ENCODE measurements at regions of chr9 and their contacts with region 1.

Region 1: GRCh38 chr9:35096035-35096849 is at the start of gene PIGO:
- DNase-seq: peak; percentile 84
- H3K4me3 ChIP-seq: peak within 1 kb of the TSS; percentile 76 to 100 (median 82)
- H3K27ac ChIP-seq: peak within 1 kb of the TSS; percentile 91
- H3K4me1 ChIP-seq: peaks cover 7% of the 10 kb centered on the region
- H3K27me3 ChIP-seq: no peaks in the 10 kb centered on the region
- CTCF ChIP-seq: peak; percentile 93
- total RNA-seq, gene PIGO: 17.8 to 33.3 TPM

Region 2: GRCh38 chr9:34994260-34994899 is 101.9 kb before region 1 on chr9:
- CTCF ChIA-PET with region 1: no interaction called
- dilution Hi-C with region 1: no loop called
- in situ Hi-C with region 1: no loop called
- intact Hi-C with region 1: loop called (anchors 2 kb)
- DNase-seq: peak; percentile 43
- H3K4me3 ChIP-seq: no peak overlapping the region
- H3K27ac ChIP-seq: no peak overlapping the region
- H3K4me1 ChIP-seq: peaks cover 36% of the 10 kb centered on the region
- H3K27me3 ChIP-seq: no peaks in the 10 kb centered on the region
- CTCF ChIP-seq: peak; percentile 82

Region 3: DNA sequence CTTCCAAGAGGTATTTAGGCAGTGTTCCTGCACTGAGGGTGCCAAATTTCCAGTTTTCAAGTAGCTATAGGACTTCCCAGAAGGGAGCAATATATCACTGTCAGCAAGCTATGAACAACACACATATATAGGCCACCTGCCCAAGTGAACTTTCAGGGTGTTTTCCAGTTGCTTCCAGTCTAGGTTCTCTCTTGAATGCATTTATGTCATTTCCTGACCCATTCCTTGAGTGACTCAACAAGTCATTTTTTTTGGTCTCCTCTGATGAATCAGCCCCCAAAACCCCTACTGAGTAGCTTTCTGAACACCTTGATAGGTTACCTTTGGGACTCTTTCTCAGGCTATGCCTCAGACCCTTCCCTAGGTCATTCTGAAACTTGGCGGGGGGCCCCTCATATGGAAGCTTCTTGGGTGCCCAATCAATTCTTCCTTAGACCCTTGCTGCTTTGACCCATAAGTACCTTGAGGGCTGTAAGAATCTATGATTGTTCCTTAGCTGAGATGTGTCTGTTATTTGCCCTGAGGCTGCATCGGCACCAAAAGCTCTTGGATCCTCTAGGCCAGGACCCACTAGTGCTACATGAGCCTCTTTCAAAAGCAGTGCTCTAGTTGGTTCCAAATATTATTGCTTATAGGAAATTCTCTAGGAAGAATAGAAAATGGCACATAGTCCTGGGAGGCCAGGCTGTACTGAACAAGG is 94.3 kb before region 1 on chr9:
- CTCF ChIA-PET with region 1: no interaction called
- dilution Hi-C with region 1: loop called (anchors 5 kb)
- in situ Hi-C with region 1: no loop called
- intact Hi-C with region 1: no loop called
- DNase-seq: peak; percentile 91
- H3K4me3 ChIP-seq: no peak overlapping the region
- H3K27ac ChIP-seq: peak overlapping the region; percentile 61
- H3K4me1 ChIP-seq: peaks cover 21% of the 10 kb centered on the region
- H3K27me3 ChIP-seq: no peaks in the 10 kb centered on the region
- CTCF ChIP-seq: no peak

Measured in mammary epithelial cell (primary cell).